PC-9 (cell line): ENCODE measurements at regions of chr18 and their contacts with region 1.

Region 1: DNA sequence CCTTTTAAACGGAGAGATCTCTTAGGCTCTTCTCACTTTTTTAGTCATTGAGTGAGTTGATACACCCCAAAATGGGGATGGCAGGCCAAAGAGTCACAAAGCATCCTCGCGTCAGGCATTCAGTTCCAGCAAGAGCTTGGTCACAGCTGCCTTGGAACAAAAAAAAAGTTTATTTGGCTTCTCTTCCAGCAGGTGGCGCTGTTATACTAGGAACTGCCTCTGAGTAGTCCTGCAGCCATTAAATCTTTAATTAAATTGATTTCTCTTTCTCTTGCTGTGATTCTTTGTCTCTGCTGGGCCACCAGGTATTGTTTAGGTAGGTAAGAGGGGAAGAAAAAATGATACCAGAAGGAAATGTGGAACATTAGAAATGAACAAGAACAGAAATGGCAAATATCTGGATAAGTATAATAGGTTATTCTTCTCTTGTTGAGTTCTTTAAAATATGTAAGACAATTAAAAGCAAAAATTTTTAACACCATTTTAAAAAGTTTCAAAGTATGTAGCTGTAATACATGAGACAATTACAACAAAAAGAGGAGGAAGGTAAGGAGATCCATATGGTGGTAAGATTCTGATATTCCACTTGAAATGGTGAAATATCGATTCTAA is 175.1 kb downstream of the GALNT1 start:
- DNase-seq: peak; percentile 28 to 44
- H3K4me3 ChIP-seq: no peak overlapping the region
- H3K27ac ChIP-seq: no peak overlapping the region
- H3K4me1 ChIP-seq: no peaks in the 10 kb centered on the region
- H3K27me3 ChIP-seq: no peaks in the 10 kb centered on the region
- CTCF ChIP-seq: peak; percentile 86

Region 2: GRCh38 chr18:35386600-35387351 is 369.8 kb before region 1 on chr18:
- CTCF ChIA-PET with region 1: interaction called, 4 read pairs
- POLR2A ChIA-PET with region 1: no interaction called
- intact Hi-C with region 1: loop called (anchors 2 kb)
- DNase-seq: peak; percentile 45 to 48
- H3K4me3 ChIP-seq: no peak overlapping the region
- H3K27ac ChIP-seq: no peak overlapping the region
- H3K4me1 ChIP-seq: no peaks in the 10 kb centered on the region
- H3K27me3 ChIP-seq: no peaks in the 10 kb centered on the region
- CTCF ChIP-seq: peak; percentile 83

Region 3: DNA sequence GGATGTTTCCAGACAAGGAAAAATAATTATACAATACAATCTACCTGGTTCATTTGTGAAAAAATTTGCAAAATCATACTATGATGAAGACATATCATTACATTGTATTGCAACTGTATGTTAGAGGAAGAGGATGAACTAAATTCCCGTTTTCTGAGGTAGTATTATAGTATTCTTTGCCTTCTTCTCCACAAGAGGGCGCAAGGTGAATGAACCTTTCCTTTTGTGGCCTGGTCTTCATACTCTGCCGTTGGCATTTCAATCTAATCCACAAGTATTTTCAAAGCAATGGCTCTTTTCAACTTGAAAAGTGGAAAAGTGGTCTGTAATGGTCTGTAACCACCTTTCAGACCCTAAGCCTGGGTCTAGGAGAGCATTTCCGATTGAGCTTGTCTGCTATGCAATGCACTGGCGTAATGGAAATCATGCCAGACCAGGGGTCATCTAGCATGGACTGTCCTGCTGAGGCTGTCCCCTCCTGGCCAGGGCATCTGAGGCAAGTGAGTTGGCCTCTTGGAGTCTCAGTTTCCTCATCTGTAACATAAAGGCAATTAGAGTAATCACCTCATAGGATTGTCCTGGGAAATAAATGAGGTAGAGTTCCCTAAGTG is 348.6 kb before region 1 on chr18:
- CTCF ChIA-PET with region 1: no interaction called
- POLR2A ChIA-PET with region 1: no interaction called
- intact Hi-C with region 1: loop called (anchors 2 kb)
- DNase-seq: peak in 1 of 2 experiments; percentile 17
- H3K4me3 ChIP-seq: no peak overlapping the region
- H3K27ac ChIP-seq: no peak overlapping the region
- H3K4me1 ChIP-seq: peaks cover 53% of the 10 kb centered on the region
- H3K27me3 ChIP-seq: no peaks in the 10 kb centered on the region
- CTCF ChIP-seq: peak; percentile 78

Region 4: DNA sequence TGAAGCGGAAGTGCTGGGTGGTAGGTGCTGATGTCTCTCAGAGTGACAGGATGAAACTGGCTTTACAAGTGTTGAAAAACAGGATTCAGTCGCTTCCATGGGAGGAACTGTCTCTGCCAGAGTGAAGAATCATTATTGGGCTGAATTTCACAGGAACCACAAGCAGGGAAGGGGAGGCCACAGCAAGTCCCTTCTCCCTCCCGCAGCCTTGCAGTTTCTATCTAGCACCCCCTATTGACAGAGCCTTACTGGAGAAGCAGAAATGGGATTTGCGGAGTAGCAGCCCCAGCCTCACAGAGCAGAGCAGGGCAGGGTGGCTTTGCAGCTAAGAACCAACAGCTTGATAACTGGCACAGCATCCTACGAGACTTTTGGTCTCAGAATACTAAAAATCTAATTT is 182.5 kb after region 1 on chr18:
- CTCF ChIA-PET with region 1: no interaction called
- POLR2A ChIA-PET with region 1: no interaction called
- intact Hi-C with region 1: loop called (anchors 5 kb)
- DNase-seq: no peak
- H3K4me3 ChIP-seq: no peak overlapping the region
- H3K27ac ChIP-seq: no peak overlapping the region
- H3K4me1 ChIP-seq: peaks cover 12% of the 10 kb centered on the region
- H3K27me3 ChIP-seq: no peaks in the 10 kb centered on the region
- CTCF ChIP-seq: no peak

Region 5: DNA sequence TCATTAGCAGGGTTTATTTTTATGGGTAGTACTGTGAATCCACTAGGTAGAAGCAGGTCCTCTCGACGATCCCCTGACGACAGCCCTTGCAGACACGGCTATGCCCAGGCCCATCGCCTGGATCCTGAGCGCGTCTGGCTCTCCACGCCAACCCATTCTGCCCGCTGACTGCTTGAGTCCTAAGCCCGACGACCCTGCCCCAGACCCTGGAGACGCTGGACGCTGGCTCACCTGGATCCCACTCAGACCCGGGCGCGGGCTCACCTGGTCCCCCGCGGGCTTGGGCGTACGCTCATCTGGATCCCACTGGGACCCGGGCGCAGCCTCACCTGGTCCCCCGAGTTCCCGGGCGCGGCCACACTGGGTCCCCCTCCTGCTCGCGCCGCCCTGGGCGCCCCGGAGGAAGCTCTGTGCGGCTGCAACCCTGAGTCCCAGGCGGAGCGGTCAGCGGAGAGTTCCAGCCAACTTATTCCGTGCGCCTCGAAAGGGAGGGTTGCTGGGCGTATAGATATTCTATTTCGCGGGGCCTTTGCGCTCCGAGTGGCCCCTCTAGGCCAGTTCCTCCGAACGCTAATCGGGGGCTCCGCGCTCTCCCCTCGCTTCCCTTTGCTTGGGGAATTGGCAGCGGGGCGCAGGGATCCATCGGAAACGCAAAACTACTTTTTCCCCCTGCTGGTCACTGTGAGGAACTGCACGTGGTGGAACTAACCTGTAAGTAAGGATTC is 193.5 kb after region 1 on chr18:
- CTCF ChIA-PET with region 1: no interaction called
- POLR2A ChIA-PET with region 1: no interaction called
- intact Hi-C with region 1: loop called (anchors 5 kb)
- DNase-seq: peak in 1 of 2 experiments; percentile 23
- H3K4me3 ChIP-seq: peak overlapping the region; percentile 51; the same call in 1 of the 2 replicates
- H3K27ac ChIP-seq: no peak overlapping the region
- H3K4me1 ChIP-seq: no peaks in the 10 kb centered on the region
- H3K27me3 ChIP-seq: 0 out of 2 replicates have a peak, but pooled peaks cover 3% of the 10 kb centered on the region
- CTCF ChIP-seq: peak; percentile 87

Region 6: DNA sequence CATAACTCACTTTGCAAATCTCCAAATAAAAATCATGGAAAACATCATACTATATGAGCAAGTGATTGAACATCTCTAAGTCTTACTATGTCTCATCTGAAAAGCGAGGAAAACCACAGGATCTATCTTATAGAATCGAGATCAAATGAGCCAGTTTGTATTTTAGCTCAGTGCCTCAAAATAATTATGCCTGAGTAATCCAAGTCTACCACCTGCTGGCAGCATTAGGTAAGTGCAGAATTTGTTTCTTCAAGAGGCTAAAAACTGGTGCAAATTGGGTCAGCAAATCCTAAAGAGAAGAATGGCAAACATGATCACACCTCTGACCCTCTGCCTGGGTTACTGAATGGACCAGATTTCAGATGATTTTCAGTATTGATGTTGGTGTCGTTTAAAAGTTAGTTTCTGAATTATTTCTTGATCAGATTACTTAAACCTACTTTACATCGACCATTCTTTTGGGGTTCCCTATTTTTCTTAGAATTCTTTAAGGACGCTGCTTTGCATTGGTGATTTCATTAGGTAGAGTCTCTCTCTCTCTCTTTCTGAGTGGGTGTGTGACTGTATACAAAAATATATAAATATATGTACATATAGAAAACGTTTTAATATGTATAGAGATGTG is 528.2 kb after region 1 on chr18:
- CTCF ChIA-PET with region 1: no interaction called
- POLR2A ChIA-PET with region 1: no interaction called
- intact Hi-C with region 1: loop called (anchors 5 kb)
- DNase-seq: peak; percentile 11 to 41
- H3K4me3 ChIP-seq: no peak overlapping the region
- H3K27ac ChIP-seq: no peak overlapping the region
- H3K4me1 ChIP-seq: no peaks in the 10 kb centered on the region
- H3K27me3 ChIP-seq: no peaks in the 10 kb centered on the region
- CTCF ChIP-seq: peak; percentile 81